Prostate gland (tissue), 2 donors: ENCODE measurements at regions of chr2 and their contacts with region 1.

Region 1: DNA sequence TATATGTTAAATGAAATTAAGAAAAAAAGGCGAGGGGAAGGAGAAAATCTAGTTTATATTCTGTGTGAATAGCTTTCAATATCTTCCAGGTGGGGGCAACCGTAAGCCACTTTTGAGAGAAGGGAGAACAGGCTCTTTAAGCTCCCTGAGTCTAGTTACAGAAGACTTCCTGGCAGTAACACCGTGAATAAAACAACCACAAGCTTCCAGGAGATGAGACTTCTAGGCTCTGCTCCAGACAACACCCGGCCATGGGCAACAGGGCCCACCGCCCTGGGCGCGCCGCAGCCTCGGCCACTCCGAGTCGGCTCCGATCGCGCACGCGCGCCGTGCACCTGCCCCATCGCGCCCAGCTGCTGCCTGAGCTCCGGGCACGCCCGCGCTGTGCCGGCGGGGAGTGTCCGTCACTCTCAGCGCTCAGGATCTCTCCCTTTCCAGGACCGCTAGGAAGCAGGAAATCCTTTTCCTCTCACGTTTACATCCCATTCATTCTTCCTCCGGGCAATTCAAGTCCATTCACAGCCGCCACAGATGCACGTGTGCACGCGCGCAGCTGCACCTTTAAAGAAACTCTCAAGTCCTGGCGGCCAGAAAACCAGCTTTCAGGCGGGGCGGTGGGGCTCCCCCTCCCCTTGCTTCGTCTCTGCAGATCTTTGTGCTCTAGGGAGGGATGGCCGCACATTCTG is 19.4 kb upstream of the PAX3 start:
- DNase-seq: peak; percentile 41
- H3K4me3 ChIP-seq: peak overlapping the region; percentile 22 to 26
- H3K27ac ChIP-seq: no peak overlapping the region
- H3K4me1 ChIP-seq: peaks cover 4% of the 10 kb centered on the region
- H3K27me3 ChIP-seq: no peaks in the 10 kb centered on the region
- CTCF ChIP-seq: peak in 3 of 4 experiments; percentile 42 to 58 (median 46)
- POLR2A ChIP-seq: no peak

Region 2: GRCh38 chr2:222208010-222208690 is 110.0 kb before region 1 on chr2:
- intact Hi-C with region 1: no loop called
- DNase-seq: no peak
- H3K4me3 ChIP-seq: no peak overlapping the region
- H3K27ac ChIP-seq: no peak overlapping the region
- H3K4me1 ChIP-seq: no peaks in the 10 kb centered on the region
- H3K27me3 ChIP-seq: no peaks in the 10 kb centered on the region
- CTCF ChIP-seq: no peak
- POLR2A ChIP-seq: no peak

Region 3: GRCh38 chr2:222561817-222562645 is 243.9 kb after region 1 on chr2:
- intact Hi-C with region 1: loop called (anchors 5 kb)
- DNase-seq: peak; percentile 27
- H3K4me3 ChIP-seq: no peak overlapping the region
- H3K27ac ChIP-seq: no peak overlapping the region
- H3K4me1 ChIP-seq: no peaks in the 10 kb centered on the region
- H3K27me3 ChIP-seq: no peaks in the 10 kb centered on the region
- CTCF ChIP-seq: peak in 3 of 4 experiments; percentile 57 to 69 (median 59)
- POLR2A ChIP-seq: no peak

Region 4: DNA sequence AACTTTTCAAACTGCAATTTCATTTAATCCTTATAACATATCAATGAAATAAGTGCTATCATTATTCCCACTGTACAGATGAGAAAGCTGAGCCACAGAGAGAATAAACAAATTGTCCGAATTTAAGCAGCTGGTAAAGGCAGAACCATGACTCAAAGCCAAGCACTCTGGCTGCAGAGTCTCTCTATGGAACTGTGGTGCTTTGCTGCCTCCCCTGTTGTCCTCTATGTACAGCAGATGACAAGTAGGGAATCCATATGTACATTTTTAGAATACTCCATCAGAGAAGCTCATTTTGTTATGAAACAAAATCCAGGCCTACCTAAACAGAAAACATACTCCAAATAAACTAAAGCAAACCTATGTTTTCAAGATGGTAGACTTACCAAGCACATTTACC is 292.6 kb after region 1 on chr2:
- intact Hi-C with region 1: loop called (anchors 2 kb)
- DNase-seq: no peak
- H3K4me3 ChIP-seq: no peak overlapping the region
- H3K27ac ChIP-seq: no peak overlapping the region
- H3K4me1 ChIP-seq: no peaks in the 10 kb centered on the region
- H3K27me3 ChIP-seq: no peaks in the 10 kb centered on the region
- CTCF ChIP-seq: no peak
- POLR2A ChIP-seq: no peak